HepG2 (cell line): ENCODE measurements at regions of chr16 and their contacts with region 1.

Region 1: GRCh38 chr16:82031116-82032084 is 3.7 kb upstream of the HSD17B2 start:
- DNase-seq: peak; percentile 71
- ATAC-seq: peak; percentile 14; the same call in 1 of the 3 replicates
- H3K4me3 ChIP-seq: no peak overlapping the region
- H3K27ac ChIP-seq: no peak overlapping the region
- H3K4me1 ChIP-seq: peaks cover 39% of the 10 kb centered on the region
- H3K27me3 ChIP-seq: no peaks in the 10 kb centered on the region; a peak in 1 of 5 replicates
- CTCF ChIP-seq: peak; percentile 88
- EP300 ChIP-seq: no peak
- POLR2A ChIP-seq: no peak
- RAD21 ChIP-seq: peak; percentile 81

Region 2: GRCh38 chr16:81940781-81941560 is 90.4 kb before region 1 on chr16:
- CTCF ChIA-PET with region 1: no interaction called
- POLR2A ChIA-PET with region 1: no interaction called
- in situ Hi-C with region 1: no loop called
- intact Hi-C with region 1: loop called (anchors 1 kb)
- DNase-seq: peak; percentile 47
- ATAC-seq: peak; percentile 55; the same call in 2 of the 3 replicates
- H3K4me3 ChIP-seq: no peak overlapping the region
- H3K27ac ChIP-seq: no peak overlapping the region
- H3K4me1 ChIP-seq: no peaks in the 10 kb centered on the region
- H3K27me3 ChIP-seq: peaks cover 0 to 30% of the 10 kb centered on the region in 2 experiments; a peak in 3 of 5 replicates
- CTCF ChIP-seq: peak; percentile 57
- EP300 ChIP-seq: no peak
- POLR2A ChIP-seq: no peak
- RAD21 ChIP-seq: no peak

Region 3: GRCh38 chr16:82050909-82051357 is 19.5 kb after region 1 on chr16:
- CTCF ChIA-PET with region 1: no interaction called
- POLR2A ChIA-PET with region 1: interaction called, 14 read pairs
- in situ Hi-C with region 1: no loop called
- intact Hi-C with region 1: loop called (anchors 2 kb)
- DNase-seq: peak; percentile 92
- ATAC-seq: peak; percentile 66
- H3K4me3 ChIP-seq: peak overlapping the region in 1 of 3 experiments; percentile 27; a peak in 1 of 6 replicates
- H3K27ac ChIP-seq: peak overlapping the region; percentile 64
- H3K4me1 ChIP-seq: peaks cover 100% of the 10 kb centered on the region
- H3K27me3 ChIP-seq: no peaks in the 10 kb centered on the region
- CTCF ChIP-seq: no peak
- EP300 ChIP-seq: peak in 1 of 2 experiments; percentile 89; a peak in 2 of 4 replicates
- POLR2A ChIP-seq: no peak
- RAD21 ChIP-seq: no peak

Region 4: DNA sequence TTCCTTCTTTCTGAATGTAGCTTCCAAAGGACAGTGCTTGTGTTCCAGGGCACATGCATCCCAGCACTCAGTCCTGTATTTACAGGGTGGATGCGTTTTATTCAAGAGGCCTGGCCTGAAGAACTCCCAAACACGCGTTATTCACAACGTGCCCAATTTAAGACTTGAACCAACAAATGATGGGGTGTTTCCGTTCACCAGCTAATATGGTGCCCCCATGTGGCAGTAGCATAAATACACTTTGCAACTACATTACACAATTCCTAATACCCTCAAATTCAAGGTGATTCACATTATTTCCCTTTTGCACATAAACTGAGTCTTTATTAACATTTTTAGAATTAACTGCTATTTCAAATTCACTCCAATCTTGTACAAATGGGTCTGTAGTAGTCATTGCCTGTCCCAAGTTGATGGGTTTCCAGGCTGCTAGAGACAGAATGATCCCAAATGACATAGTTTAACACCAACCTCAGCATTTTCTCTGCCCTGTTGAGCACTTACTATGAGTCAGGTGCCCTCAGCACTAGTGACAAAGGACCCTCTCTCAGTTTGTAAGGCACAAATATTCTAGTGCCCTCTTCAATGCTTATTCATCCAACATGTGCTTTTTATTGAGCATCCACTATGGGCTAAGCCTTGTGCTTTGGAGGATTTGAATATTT is 30.6 kb after region 1 on chr16:
- CTCF ChIA-PET with region 1: interaction called, 10 read pairs
- POLR2A ChIA-PET with region 1: interaction called, 5 read pairs
- in situ Hi-C with region 1: no loop called
- intact Hi-C with region 1: loop called (anchors 2 kb)
- DNase-seq: no peak
- ATAC-seq: peak; percentile 15; the same call in 2 of the 3 replicates
- H3K4me3 ChIP-seq: peak overlapping the region in 1 of 3 experiments; percentile 2; a peak in 1 of 6 replicates
- H3K27ac ChIP-seq: peak overlapping the region; percentile 54
- H3K4me1 ChIP-seq: peaks cover 93% of the 10 kb centered on the region
- H3K27me3 ChIP-seq: no peaks in the 10 kb centered on the region
- CTCF ChIP-seq: peak; percentile 58
- EP300 ChIP-seq: no peak
- POLR2A ChIP-seq: no peak
- RAD21 ChIP-seq: peak; percentile 36; the same call in 1 of the 2 replicates

Region 5: GRCh38 chr16:82082543-82083244 is 51.3 kb after region 1 on chr16:
- CTCF ChIA-PET with region 1: no interaction called
- POLR2A ChIA-PET with region 1: interaction called, 14 read pairs
- in situ Hi-C with region 1: no loop called
- intact Hi-C with region 1: loop called (anchors 2 kb)
- DNase-seq: peak; percentile 97
- ATAC-seq: peak; percentile 90
- H3K4me3 ChIP-seq: no peak overlapping the region
- H3K27ac ChIP-seq: no peak overlapping the region
- H3K4me1 ChIP-seq: peaks cover 63% of the 10 kb centered on the region
- H3K27me3 ChIP-seq: no peaks in the 10 kb centered on the region
- CTCF ChIP-seq: no peak
- EP300 ChIP-seq: peak in 1 of 2 experiments; percentile 93; a peak in 2 of 4 replicates
- POLR2A ChIP-seq: 0 out of 4 replicates have a peak, but pooled peaks of 1 of the 2 experiments have one; percentile 2
- RAD21 ChIP-seq: no peak

Region 6: DNA sequence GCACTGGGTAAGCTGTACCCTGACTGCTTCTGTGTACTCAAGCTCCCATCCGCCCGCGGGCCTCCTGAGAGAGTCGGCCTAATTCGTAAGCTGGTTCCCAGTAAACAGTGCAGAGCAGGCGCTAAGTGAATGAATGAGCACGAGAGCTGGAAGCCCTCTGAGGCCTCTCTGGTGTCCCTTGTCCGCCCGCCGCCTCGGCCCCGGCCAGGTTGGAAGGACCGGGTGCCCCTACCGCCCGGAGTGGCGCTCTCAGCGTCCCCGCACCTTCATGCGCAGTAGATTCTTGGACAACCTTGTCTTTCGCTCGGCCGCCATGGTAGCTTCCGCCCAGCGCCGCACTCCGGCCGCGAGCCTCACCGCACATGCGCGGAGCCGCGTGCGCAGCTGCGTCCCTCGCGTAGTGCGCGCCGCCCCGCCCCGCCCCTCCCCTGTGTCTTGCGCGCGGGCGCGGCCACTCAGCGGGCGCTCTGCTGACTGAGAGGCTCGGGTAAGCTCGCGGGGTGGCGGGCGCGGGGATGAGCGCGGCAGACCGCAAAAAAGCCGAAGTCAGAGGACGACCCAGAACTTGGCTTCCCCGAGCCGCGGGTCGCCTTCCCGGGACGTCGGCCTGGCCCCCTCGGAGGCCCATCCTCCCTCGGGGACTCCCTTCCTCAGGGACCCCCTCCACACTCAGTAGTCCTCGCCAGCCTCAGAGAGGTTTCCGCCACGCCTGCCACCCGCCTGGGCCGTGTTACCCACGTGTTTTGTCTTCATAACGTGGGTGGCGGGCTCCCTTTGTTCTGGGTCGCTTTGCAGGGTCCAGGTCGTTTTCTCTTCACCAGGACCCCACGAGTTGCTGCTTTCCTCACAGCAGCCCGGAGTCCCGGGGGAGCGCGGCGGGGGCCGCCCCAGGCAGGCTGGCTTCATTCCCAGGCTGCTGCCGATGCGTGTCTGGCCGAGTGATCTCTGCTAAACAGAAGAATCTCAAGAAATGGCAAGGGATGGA is 138.8 kb after region 1 on chr16 and contains the start of gene MPHOSPH6:
- CTCF ChIA-PET with region 1: no interaction called
- POLR2A ChIA-PET with region 1: interaction called, 13 read pairs
- in situ Hi-C with region 1: no loop called
- intact Hi-C with region 1: loop called (anchors 1 kb)
- DNase-seq: peak; percentile 84
- ATAC-seq: peak; percentile 96
- H3K4me3 ChIP-seq: peak within 1 kb of the TSS; percentile 77 to 97 (median 85)
- H3K27ac ChIP-seq: peak within 1 kb of the TSS; percentile 84
- H3K4me1 ChIP-seq: peaks cover 43% of the 10 kb centered on the region
- H3K27me3 ChIP-seq: peaks cover 0 to 20% of the 10 kb centered on the region in 2 experiments; a peak in 4 of 5 replicates
- CTCF ChIP-seq: peak; percentile 35
- EP300 ChIP-seq: peak in 1 of 2 experiments; percentile 29; a peak in 1 of 4 replicates
- POLR2A ChIP-seq: peak; percentile 92 to 95
- RAD21 ChIP-seq: peak; percentile 51
- total RNA-seq, gene MPHOSPH6: 76.4 and 96.7 TPM in 2 replicates

Region 7: DNA sequence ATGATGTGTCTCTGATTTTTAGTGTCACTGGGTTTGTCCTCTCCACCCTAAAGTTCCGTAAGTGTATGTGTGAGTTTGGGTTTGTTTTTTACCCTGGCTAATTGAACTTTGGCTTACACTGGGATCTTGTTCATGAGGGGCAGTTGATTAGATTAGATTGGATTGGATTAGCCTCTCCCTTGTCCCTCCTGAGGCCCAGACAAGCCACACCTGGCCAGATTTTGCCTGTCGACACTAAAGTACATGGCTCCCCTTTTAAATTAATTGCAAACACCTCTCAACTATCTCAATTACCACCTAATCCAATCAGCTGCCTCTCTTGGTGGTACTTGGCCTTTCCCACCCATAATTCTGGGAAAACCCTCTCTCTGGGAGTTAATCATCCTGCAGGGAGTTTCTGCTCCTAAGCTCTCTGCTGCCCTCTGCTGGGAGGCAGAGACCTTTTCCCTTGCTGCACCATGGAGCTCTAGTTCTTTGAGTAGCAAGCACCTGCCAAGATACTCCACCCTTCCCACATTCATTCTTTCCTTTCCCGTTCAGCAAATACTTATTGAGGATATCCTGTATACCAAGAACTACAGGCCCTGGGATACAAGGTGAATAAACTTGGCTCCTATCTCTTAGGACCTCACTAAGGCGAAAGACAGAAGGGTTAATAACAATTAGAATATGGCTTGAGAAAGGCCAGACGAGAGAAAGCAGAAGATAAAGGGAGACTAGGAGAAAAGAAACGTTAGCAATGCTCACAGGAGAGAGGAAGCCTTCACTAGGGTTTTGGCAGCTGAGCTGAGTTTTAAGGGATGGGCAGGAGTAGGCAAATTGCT is 198.6 kb after region 1 on chr16:
- CTCF ChIA-PET with region 1: interaction called, 51 read pairs
- POLR2A ChIA-PET with region 1: interaction called, 4 read pairs
- in situ Hi-C with region 1: loop called (anchors 5 kb)
- intact Hi-C with region 1: loop called (anchors 1 kb)
- DNase-seq: peak; percentile 75
- ATAC-seq: peak; percentile 94
- H3K4me3 ChIP-seq: no peak overlapping the region
- H3K27ac ChIP-seq: no peak overlapping the region
- H3K4me1 ChIP-seq: no peaks in the 10 kb centered on the region
- H3K27me3 ChIP-seq: no peaks in the 10 kb centered on the region
- CTCF ChIP-seq: peak; percentile 94
- EP300 ChIP-seq: no peak
- POLR2A ChIP-seq: no peak
- RAD21 ChIP-seq: peak; percentile 90